Naive thymus-derived CD4-positive, alpha-beta T cell (primary cell): ENCODE measurements at regions of chr1 and their contacts with region 1.

Region 1: GRCh38 chr1:8348777-8349491 is 31.0 kb downstream of the SLC45A1 start:
- DNase-seq: peak; percentile 46 to 77 (median 64)
- ATAC-seq: peak; percentile 88
- H3K4me3 ChIP-seq: no peak overlapping the region
- H3K4me3 Mint-ChIP-seq: no peak overlapping the region
- H3K27ac ChIP-seq: no peak overlapping the region
- H3K27ac Mint-ChIP-seq: peak overlapping the region in 6 of 9 donors; percentile 6 to 71 (median 27)
- H3K4me1 ChIP-seq: peaks cover 3 to 8% of the 10 kb centered on the region in 2 donors
- H3K4me1 Mint-ChIP-seq: peaks cover 0 to 5% (median 4%) of the 10 kb centered on the region in 7 donors
- H3K27me3 ChIP-seq: no peaks in the 10 kb centered on the region
- H3K27me3 Mint-ChIP-seq: peaks cover 0 to 3% (median 0%) of the 10 kb centered on the region in 5 donors

Region 2: GRCh38 chr1:7975212-7975865 is 373.6 kb before region 1 on chr1:
- CTCF ChIA-PET with region 1: interaction called, 3 read pairs
- POLR2A ChIA-PET with region 1: no interaction called
- intact Hi-C with region 1: loop called in 1 of 2 experiments (anchors 2 kb)
- DNase-seq: no peak
- ATAC-seq: peak; percentile 78
- H3K4me3 ChIP-seq: no peak overlapping the region
- H3K4me3 Mint-ChIP-seq: no peak overlapping the region
- H3K27ac ChIP-seq: no peak overlapping the region
- H3K27ac Mint-ChIP-seq: peak overlapping the region in 3 of 9 donors; percentile 14 to 74 (median 44)
- H3K4me1 ChIP-seq: no peaks in the 10 kb centered on the region
- H3K4me1 Mint-ChIP-seq: peaks cover 2 to 7% (median 5%) of the 10 kb centered on the region in 7 donors
- H3K27me3 ChIP-seq: no peaks in the 10 kb centered on the region
- H3K27me3 Mint-ChIP-seq: no peaks in the 10 kb centered on the region

Region 3: GRCh38 chr1:7983086-7983778 is 365.7 kb before region 1 on chr1:
- CTCF ChIA-PET with region 1: interaction called, 9 read pairs
- POLR2A ChIA-PET with region 1: no interaction called
- intact Hi-C with region 1: loop called (anchors 1 kb)
- DNase-seq: no peak
- ATAC-seq: no peak
- H3K4me3 ChIP-seq: no peak overlapping the region
- H3K4me3 Mint-ChIP-seq: no peak overlapping the region
- H3K27ac ChIP-seq: no peak overlapping the region
- H3K27ac Mint-ChIP-seq: no peak overlapping the region
- H3K4me1 ChIP-seq: peaks cover 0 to 8% of the 10 kb centered on the region in 2 donors
- H3K4me1 Mint-ChIP-seq: peaks cover 5 to 13% (median 10%) of the 10 kb centered on the region in 7 donors
- H3K27me3 ChIP-seq: no peaks in the 10 kb centered on the region
- H3K27me3 Mint-ChIP-seq: no peaks in the 10 kb centered on the region

Region 4: DNA sequence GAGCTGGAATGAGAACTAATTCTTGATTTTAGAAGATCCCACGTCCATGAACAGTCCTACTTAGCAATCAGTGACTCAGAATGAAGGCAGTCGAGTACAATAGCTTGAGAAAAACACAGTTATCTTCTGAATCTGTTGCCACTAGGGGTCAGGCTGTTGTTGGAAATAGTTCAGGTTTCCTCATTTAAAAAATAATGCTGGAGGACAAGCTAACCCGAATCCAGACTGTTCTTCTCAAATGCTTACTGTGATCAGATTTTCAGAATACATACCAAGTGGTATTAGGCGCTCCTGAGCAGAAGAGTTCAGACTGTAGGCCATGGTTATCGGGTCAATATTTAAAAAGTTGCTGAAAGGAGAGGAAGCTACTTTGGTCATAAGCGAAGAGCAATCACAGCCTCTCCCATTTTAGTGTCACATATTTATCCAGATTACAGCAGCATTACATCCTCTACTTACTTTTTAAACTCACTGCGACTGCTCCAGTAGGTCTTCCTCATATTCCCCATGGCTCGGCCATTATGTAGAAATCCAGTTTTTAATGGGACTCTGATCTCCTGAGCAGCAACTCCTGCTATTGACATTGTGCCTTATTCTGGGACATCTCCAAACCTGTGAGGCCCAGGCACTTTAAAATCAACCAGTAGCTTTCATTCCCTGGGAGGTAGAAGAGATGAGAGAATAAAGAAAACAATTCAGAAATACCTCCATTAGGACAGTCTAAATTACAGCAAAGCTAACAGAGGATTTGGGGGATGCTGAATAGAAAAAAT is 333.7 kb before region 1 on chr1:
- CTCF ChIA-PET with region 1: interaction called, 100 read pairs
- POLR2A ChIA-PET with region 1: interaction called, 3 read pairs
- intact Hi-C with region 1: loop called (anchors 1 kb)
- DNase-seq: peak in 8 of 9 donors; percentile 32 to 67 (median 58)
- ATAC-seq: peak; percentile 80
- H3K4me3 ChIP-seq: no peak overlapping the region
- H3K4me3 Mint-ChIP-seq: no peak overlapping the region
- H3K27ac ChIP-seq: no peak overlapping the region
- H3K27ac Mint-ChIP-seq: no peak overlapping the region
- H3K4me1 ChIP-seq: no peaks in the 10 kb centered on the region
- H3K4me1 Mint-ChIP-seq: peaks cover 0 to 3% (median 0%) of the 10 kb centered on the region in 7 donors
- H3K27me3 ChIP-seq: peaks cover 0 to 7% of the 10 kb centered on the region in 2 donors
- H3K27me3 Mint-ChIP-seq: peaks cover 16 to 31% (median 27%) of the 10 kb centered on the region in 5 donors

Region 5: GRCh38 chr1:8314346-8315280 is 34.3 kb before region 1 on chr1:
- CTCF ChIA-PET with region 1: interaction called, 3 read pairs
- POLR2A ChIA-PET with region 1: no interaction called
- intact Hi-C with region 1: loop called in 1 of 2 experiments (anchors 1 kb)
- DNase-seq: peak in 8 of 9 donors; percentile 14 to 56 (median 46)
- ATAC-seq: peak; percentile 56
- H3K4me3 ChIP-seq: no peak overlapping the region
- H3K4me3 Mint-ChIP-seq: peak overlapping the region in 5 of 10 donors; percentile 9 to 48 (median 32)
- H3K27ac ChIP-seq: no peak overlapping the region
- H3K27ac Mint-ChIP-seq: no peak overlapping the region
- H3K4me1 ChIP-seq: peaks cover 4 to 11% of the 10 kb centered on the region in 2 donors
- H3K4me1 Mint-ChIP-seq: peaks cover 6 to 26% (median 23%) of the 10 kb centered on the region in 7 donors
- H3K27me3 ChIP-seq: peaks cover 5 to 8% of the 10 kb centered on the region in 2 donors
- H3K27me3 Mint-ChIP-seq: peaks cover 7 to 51% (median 33%) of the 10 kb centered on the region in 5 donors

Region 6: GRCh38 chr1:8525558-8526275 is 176.8 kb after region 1 on chr1:
- CTCF ChIA-PET with region 1: no interaction called
- POLR2A ChIA-PET with region 1: no interaction called
- intact Hi-C with region 1: no loop called
- DNase-seq: peak; percentile 31 to 95 (median 88)
- ATAC-seq: peak; percentile 96
- H3K4me3 ChIP-seq: peak overlapping the region; percentile 60
- H3K4me3 Mint-ChIP-seq: no peak overlapping the region
- H3K27ac ChIP-seq: peak overlapping the region; percentile 95
- H3K27ac Mint-ChIP-seq: no peak overlapping the region
- H3K4me1 ChIP-seq: peaks cover 12 to 30% of the 10 kb centered on the region in 2 donors
- H3K4me1 Mint-ChIP-seq: peaks cover 22 to 57% (median 35%) of the 10 kb centered on the region in 7 donors
- H3K27me3 ChIP-seq: no peaks in the 10 kb centered on the region
- H3K27me3 Mint-ChIP-seq: no peaks in the 10 kb centered on the region